ENCODE measurements at regions of chr18 and their contacts with region 1.

Region 1: DNA sequence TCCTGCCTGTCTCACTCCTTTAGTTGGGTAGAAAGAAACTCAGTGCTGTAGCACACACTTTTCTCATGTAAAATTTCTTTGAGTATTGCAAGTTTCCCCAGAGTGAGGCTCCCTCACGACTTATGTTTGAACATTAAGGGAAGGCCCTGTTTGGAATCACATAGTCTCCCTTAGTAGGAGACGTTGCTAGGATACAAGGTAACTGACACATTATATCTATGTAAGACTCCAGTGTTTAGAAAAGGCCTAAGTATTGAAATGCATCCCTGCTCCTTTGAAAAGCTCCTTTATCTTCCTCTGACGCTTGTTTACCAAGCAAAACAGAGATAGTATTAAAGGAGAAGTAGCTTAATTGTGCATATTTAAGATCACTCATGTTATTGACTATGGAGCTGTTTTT is 248.2 kb downstream of the PHLPP1 start:
- DNase-seq: no peak
- ATAC-seq: no peak; the same call in 1 of the 2 replicates
- H3K4me3 Mint-ChIP-seq: no peak overlapping the region
- H3K27ac Mint-ChIP-seq: peak overlapping the region; percentile 44; the same call in 1 of the 2 replicates
- H3K4me1 Mint-ChIP-seq: peaks cover 28% of the 10 kb centered on the region
- H3K27me3 Mint-ChIP-seq: no peaks in the 10 kb centered on the region
- CTCF ChIP-seq: no peak

Region 2: GRCh38 chr18:62767836-62768557 is 195.5 kb before region 1 on chr18:
- CTCF ChIA-PET with region 1: no interaction called
- POLR2A ChIA-PET with region 1: interaction called, 15 read pairs
- DNase-seq: no peak
- ATAC-seq: no peak
- H3K4me3 Mint-ChIP-seq: no peak overlapping the region
- H3K27ac Mint-ChIP-seq: peak overlapping the region; percentile 85
- H3K4me1 Mint-ChIP-seq: peaks cover 68% of the 10 kb centered on the region
- H3K27me3 Mint-ChIP-seq: no peaks in the 10 kb centered on the region
- CTCF ChIP-seq: no peak

Measured in WTC11 (cell line).